Activated CD4-positive, alpha-beta memory T cell treated with anti-CD3 and anti-CD28 coated beads for 36 hours (primary cell): ENCODE measurements at regions of chr5 and their contacts with region 1.

Region 1: GRCh38 chr5:43556857-43557542 is at the start of gene PAIP1:
- DNase-seq: peak; percentile 89
- H3K4me3 Mint-ChIP-seq: peak within 1 kb of the TSS; percentile 90
- H3K27ac Mint-ChIP-seq: peak within 1 kb of the TSS; percentile 91
- H3K4me1 Mint-ChIP-seq: peaks cover 15% of the 10 kb centered on the region
- H3K27me3 Mint-ChIP-seq: no peaks in the 10 kb centered on the region
- total RNA-seq, gene PAIP1: 49.2 to 50.5 TPM

Region 2: GRCh38 chr5:42950440-42951292 is 606.3 kb before region 1 on chr5:
- CTCF ChIA-PET with region 1: no interaction called
- POLR2A ChIA-PET with region 1: no interaction called
- intact Hi-C with region 1: loop called (anchors 5 kb)
- DNase-seq: peak; percentile 86
- H3K4me3 Mint-ChIP-seq: peak overlapping the region; percentile 94
- H3K27ac Mint-ChIP-seq: peak overlapping the region; percentile 97
- H3K4me1 Mint-ChIP-seq: peaks cover 30% of the 10 kb centered on the region
- H3K27me3 Mint-ChIP-seq: no peaks in the 10 kb centered on the region

Region 3: GRCh38 chr5:43227655-43228054 is 329.3 kb before region 1 on chr5:
- CTCF ChIA-PET with region 1: no interaction called
- POLR2A ChIA-PET with region 1: no interaction called
- intact Hi-C with region 1: no loop called
- DNase-seq: no peak
- H3K4me3 Mint-ChIP-seq: no peak overlapping the region
- H3K27ac Mint-ChIP-seq: no peak overlapping the region
- H3K4me1 Mint-ChIP-seq: no peaks in the 10 kb centered on the region
- H3K27me3 Mint-ChIP-seq: no peaks in the 10 kb centered on the region

Region 4: DNA sequence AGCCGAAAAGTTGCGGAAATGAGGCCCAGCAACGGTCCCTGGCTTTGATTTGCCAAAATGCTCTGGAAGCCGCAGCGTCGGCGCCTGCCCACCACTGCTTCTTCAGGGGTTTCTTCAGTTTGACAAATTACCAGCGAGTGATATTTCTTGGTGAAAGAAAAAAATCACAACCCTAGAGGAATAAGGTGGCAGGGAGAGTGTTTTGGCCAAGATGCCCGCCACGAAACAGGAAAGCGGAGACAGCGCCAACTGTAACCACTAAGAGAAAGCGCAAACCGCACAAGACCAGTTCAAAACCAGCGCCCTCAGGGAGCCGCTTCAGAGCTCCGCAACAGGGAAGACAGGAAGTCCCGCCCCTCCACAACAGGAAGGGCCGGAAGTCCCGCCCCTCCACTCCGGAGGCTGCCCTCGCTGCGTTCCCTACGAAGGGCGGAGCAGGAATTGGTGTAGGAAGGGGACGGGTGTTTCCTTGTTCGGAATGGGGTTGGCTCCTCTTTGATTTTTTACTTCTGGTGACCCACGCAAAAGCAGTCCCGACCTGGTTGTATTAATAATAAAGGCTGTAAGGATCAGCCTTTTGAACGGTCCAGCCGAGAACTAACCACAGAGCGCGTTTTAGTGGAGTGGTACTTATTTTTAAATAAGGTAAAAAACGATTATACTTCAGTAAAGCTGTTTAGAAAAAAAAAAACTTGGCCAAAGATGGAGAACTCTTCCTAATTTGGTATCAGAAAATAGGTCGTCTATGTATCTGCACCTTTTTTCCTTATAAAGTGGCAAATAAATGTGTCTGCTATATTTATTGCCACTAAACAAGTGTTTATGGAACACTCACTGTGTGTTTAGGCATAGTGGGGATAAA is 42.0 kb before region 1 on chr5 and contains the start of gene C5orf34:
- CTCF ChIA-PET with region 1: interaction called, 4 read pairs
- POLR2A ChIA-PET with region 1: no interaction called
- intact Hi-C with region 1: loop called (anchors 1 kb)
- DNase-seq: peak; percentile 97
- H3K4me3 Mint-ChIP-seq: peak within 1 kb of the TSS; percentile 95
- H3K27ac Mint-ChIP-seq: peak within 1 kb of the TSS; percentile 99
- H3K4me1 Mint-ChIP-seq: peaks cover 26% of the 10 kb centered on the region
- H3K27me3 Mint-ChIP-seq: no peaks in the 10 kb centered on the region
- total RNA-seq, gene C5orf34: 11.8 to 13.1 TPM

Region 5: GRCh38 chr5:43540746-43541145 is 16.3 kb before region 1 on chr5:
- CTCF ChIA-PET with region 1: interaction called, 15 read pairs
- POLR2A ChIA-PET with region 1: no interaction called
- intact Hi-C with region 1: no loop called
- DNase-seq: no peak
- H3K4me3 Mint-ChIP-seq: no peak overlapping the region
- H3K27ac Mint-ChIP-seq: no peak overlapping the region
- H3K4me1 Mint-ChIP-seq: peaks cover 9% of the 10 kb centered on the region
- H3K27me3 Mint-ChIP-seq: no peaks in the 10 kb centered on the region

Region 6: GRCh38 chr5:44808435-44809214 is 1251.6 kb after region 1 on chr5 and contains the start of gene MRPS30:
- CTCF ChIA-PET with region 1: no interaction called
- POLR2A ChIA-PET with region 1: no interaction called
- intact Hi-C with region 1: loop called (anchors 5 kb)
- DNase-seq: peak; percentile 94
- H3K4me3 Mint-ChIP-seq: peak within 1 kb of the TSS; percentile 99
- H3K27ac Mint-ChIP-seq: peak within 1 kb of the TSS; percentile 98
- H3K4me1 Mint-ChIP-seq: peaks cover 29% of the 10 kb centered on the region
- H3K27me3 Mint-ChIP-seq: peaks cover 1% of the 10 kb centered on the region
- total RNA-seq, gene MRPS30: 47.1 to 49.3 TPM